A549 (cell line): ENCODE measurements at regions of chr11 and their contacts with region 1.

Region 1: DNA sequence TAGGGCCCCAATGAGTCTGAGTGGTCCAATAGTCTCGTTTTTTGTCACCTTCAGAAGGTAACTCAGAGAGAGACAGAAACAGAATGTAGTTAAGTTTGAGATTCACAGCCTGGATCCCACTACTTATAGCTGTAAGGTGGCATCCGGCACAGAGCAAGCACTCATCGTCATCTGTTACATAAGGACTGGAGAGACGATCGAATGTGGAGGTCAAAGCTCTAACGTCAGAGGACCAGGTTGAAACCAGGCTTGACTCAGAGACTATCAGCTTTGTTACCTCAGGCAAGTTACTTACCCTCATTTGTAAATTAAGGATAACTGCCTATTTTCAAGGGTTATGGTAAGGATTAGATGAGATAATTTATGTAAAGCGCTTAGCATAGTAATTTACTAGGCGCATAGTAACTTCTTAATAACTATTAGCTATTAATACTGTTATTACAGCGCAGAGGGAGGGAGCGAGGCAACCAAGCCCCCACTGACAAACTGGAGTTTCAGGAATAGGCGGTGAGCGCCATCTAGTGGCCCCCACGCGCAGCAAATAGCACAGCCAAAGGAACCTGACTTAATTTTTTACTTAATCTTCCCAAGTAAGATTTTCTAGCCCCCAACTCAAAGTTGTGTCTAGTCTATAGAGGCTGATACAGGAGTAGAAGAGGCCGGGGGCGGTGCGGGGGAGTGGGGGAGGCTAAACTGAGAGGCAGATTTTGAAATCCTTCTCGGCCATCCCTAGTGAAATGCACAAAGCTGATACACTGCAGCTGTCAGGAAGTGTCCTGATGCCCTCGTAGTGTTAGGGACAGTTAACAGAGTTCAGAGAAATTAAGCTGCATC is 29.0 kb upstream of the API5 start:
- DNase-seq: peak; percentile 25 to 40
- ATAC-seq: peak; percentile 62 to 80; a peak in 4 of 6 replicates
- H3K4me3 ChIP-seq: no peak overlapping the region
- H3K27ac ChIP-seq: no peak overlapping the region
- H3K4me1 ChIP-seq: no peaks in the 10 kb centered on the region
- CTCF ChIP-seq: peak; percentile 83
- EP300 ChIP-seq: no peak
- POLR2A ChIP-seq: no peak
- RAD21 ChIP-seq: peak; percentile 75 to 80

Region 2: DNA sequence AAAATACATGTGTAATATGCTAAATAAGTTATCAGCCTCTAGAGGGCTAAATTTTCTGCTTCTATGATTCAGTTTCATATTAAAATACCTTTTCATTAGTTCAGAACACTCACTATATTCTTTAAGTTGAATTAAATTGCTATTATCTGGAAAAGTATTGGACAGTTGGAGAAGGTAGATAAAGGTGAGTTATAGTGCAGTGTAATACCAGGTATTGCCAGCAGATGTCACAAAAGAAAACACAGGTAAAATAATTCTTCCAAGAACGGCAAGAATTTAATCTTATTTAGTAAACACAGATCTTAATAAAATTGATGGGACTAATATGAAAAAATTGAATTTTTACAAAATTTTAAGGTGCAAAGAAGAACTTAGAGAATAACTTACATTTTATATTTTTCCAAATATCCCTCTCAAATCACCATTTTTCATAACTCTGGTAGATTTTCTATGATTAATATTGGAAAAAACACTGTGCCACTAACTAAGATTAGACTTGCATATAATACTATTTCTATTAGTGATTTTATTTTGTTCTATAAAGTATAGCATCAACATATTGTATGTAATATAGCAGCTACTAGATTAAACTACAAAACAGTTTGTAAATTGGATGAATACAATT is 1821.7 kb before region 1 on chr11:
- CTCF ChIA-PET with region 1: interaction called, 14 read pairs
- POLR2A ChIA-PET with region 1: no interaction called
- DNase-seq: peak in 1 of 2 experiments; percentile 11
- ATAC-seq: no peak
- H3K4me3 ChIP-seq: no peak overlapping the region
- H3K27ac ChIP-seq: no peak overlapping the region
- H3K4me1 ChIP-seq: no peaks in the 10 kb centered on the region
- CTCF ChIP-seq: peak; percentile 51
- EP300 ChIP-seq: no peak
- POLR2A ChIP-seq: no peak
- RAD21 ChIP-seq: peak in 1 of 2 experiments; percentile 35; a peak in 3 of 5 replicates

Region 3: GRCh38 chr11:43150697-43151096 is 132.1 kb before region 1 on chr11:
- CTCF ChIA-PET with region 1: no interaction called
- POLR2A ChIA-PET with region 1: no interaction called
- DNase-seq: no peak
- ATAC-seq: no peak
- H3K4me3 ChIP-seq: no peak overlapping the region
- H3K27ac ChIP-seq: no peak overlapping the region
- H3K4me1 ChIP-seq: no peaks in the 10 kb centered on the region
- CTCF ChIP-seq: no peak
- EP300 ChIP-seq: no peak
- POLR2A ChIP-seq: no peak
- RAD21 ChIP-seq: no peak

Region 4: GRCh38 chr11:43222215-43222614 is 60.6 kb before region 1 on chr11:
- CTCF ChIA-PET with region 1: interaction called, 10 read pairs
- POLR2A ChIA-PET with region 1: no interaction called
- DNase-seq: no peak
- ATAC-seq: no peak
- H3K4me3 ChIP-seq: no peak overlapping the region
- H3K27ac ChIP-seq: no peak overlapping the region
- H3K4me1 ChIP-seq: no peaks in the 10 kb centered on the region
- CTCF ChIP-seq: no peak
- EP300 ChIP-seq: no peak
- POLR2A ChIP-seq: no peak
- RAD21 ChIP-seq: no peak

Region 5: DNA sequence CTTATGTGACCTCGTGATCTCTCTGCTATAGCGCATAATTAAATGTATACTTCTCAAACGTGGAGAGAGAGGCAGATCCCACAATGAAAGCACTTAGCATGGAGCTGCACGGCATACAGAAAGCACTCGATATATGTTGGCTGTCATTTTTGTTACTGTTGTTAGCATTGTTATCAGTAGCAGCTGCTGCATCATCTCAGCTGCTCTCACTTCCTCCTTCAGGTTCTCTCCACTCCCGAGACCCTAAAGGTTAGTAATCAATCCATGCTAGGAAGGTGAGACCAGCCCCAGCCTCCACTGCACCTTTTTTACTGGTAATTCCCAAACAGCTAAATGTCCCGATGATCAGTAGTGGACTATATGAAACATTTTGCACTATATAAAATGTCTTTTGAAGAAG is 15.6 kb after region 1 on chr11:
- CTCF ChIA-PET with region 1: interaction called, 26 read pairs
- POLR2A ChIA-PET with region 1: no interaction called
- DNase-seq: no peak
- ATAC-seq: no peak
- H3K4me3 ChIP-seq: no peak overlapping the region
- H3K27ac ChIP-seq: no peak overlapping the region
- H3K4me1 ChIP-seq: no peaks in the 10 kb centered on the region
- CTCF ChIP-seq: no peak
- EP300 ChIP-seq: no peak
- POLR2A ChIP-seq: no peak
- RAD21 ChIP-seq: no peak